Mammary epithelial cell (primary cell): ENCODE measurements at regions of chr10 and their contacts with region 1.

Region 1: DNA sequence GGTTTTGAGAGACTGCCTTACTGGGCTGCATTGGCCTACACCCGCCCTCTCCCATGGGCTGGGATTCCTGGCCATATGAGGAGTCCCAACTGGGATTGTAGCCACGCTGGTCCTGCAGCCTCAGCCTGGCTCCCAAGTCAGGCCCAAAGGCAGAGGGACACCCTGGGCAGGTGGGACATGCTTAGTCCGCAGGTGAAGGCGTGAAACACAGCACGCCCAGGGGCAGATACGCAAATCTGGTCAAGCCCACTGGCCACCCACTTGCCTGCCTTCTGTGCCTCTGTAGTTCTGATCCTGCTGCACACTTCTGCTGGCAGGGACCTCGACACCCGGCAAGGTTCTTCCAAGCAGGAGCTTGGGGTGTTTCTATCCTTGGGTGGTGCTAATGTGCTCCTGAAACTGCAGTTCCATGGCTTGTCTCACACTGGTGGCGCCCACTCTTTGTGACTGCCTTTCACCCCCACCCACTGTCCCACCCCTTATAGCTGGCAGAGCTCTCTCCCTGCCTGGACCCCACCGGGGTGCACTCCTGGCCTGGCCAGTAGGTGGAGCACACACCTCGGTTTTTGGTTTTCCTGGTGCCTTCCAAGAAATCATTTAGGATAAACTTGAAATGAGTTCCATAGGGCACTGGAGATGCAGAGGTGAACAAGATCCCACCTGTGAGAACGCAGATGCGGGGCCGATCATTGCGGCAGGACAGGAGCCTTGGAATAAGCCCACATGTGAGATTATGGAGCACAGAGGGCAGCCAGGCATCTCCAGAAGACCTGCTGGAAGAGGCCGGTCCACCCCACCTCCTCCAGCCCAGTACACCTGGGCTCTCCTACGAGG is 47.9 kb downstream of the MKI67 start:
- DNase-seq: no peak
- H3K4me3 ChIP-seq: no peak overlapping the region
- H3K27ac ChIP-seq: no peak overlapping the region
- H3K4me1 ChIP-seq: no peaks in the 10 kb centered on the region
- H3K27me3 ChIP-seq: no peaks in the 10 kb centered on the region
- CTCF ChIP-seq: peak; percentile 58 to 79

Region 2: GRCh38 chr10:127535802-127536515 is 542.4 kb before region 1 on chr10:
- CTCF ChIA-PET with region 1: no interaction called
- dilution Hi-C with region 1: no loop called
- in situ Hi-C with region 1: no loop called
- intact Hi-C with region 1: no loop called
- DNase-seq: no peak
- H3K4me3 ChIP-seq: no peak overlapping the region
- H3K27ac ChIP-seq: no peak overlapping the region
- H3K4me1 ChIP-seq: peaks cover 5% of the 10 kb centered on the region
- H3K27me3 ChIP-seq: no peaks in the 10 kb centered on the region
- CTCF ChIP-seq: no peak

Region 3: GRCh38 chr10:127990846-127991542 is 87.4 kb before region 1 on chr10:
- CTCF ChIA-PET with region 1: no interaction called
- dilution Hi-C with region 1: no loop called
- in situ Hi-C with region 1: no loop called
- intact Hi-C with region 1: no loop called
- DNase-seq: peak; percentile 91
- H3K4me3 ChIP-seq: no peak overlapping the region
- H3K27ac ChIP-seq: peak overlapping the region; percentile 76
- H3K4me1 ChIP-seq: peaks cover 39% of the 10 kb centered on the region
- H3K27me3 ChIP-seq: no peaks in the 10 kb centered on the region
- CTCF ChIP-seq: no peak

Region 4: GRCh38 chr10:128102480-128103228 is 24.3 kb after region 1 on chr10:
- CTCF ChIA-PET with region 1: interaction called, 10 read pairs
- dilution Hi-C with region 1: no loop called
- in situ Hi-C with region 1: no loop called
- intact Hi-C with region 1: no loop called
- DNase-seq: no peak
- H3K4me3 ChIP-seq: no peak overlapping the region
- H3K27ac ChIP-seq: no peak overlapping the region
- H3K4me1 ChIP-seq: no peaks in the 10 kb centered on the region
- H3K27me3 ChIP-seq: no peaks in the 10 kb centered on the region
- CTCF ChIP-seq: no peak

Region 5: DNA sequence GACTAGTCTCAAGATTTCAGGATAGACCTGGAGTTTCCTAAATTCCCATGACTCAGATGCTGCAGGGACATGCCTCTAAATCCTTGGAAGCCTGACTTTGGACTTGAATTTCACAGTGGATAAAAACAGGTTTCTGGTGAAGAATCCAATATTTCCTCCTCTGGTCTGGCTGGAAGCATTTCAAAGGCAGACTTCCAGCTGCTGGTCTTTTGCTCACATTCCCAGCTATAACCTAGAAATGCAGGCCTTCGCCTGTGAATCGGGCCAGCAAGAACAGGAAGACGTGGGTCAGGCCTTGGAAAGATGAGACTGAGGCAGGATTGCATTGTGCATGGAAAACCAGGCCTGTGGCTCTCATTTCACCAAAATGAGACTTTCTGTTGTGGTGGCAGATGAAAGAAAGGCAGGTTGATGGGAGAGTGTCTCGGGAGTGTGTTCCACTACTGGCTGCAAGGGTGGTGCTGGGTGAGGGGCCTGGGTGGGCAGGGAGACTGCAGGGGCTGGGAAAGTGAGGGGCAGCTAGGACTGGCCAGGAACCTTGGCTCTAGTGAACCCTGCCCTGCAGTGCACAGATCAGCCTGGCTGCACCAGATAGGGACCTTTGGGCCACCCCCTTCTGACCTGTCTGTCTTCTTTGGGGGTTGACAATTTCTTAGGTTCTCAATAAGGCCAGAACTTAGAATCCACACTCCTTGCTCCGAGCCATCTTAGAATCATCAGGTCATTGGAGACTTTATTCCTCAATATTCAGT is 536.6 kb after region 1 on chr10:
- CTCF ChIA-PET with region 1: no interaction called
- dilution Hi-C with region 1: no loop called
- in situ Hi-C with region 1: no loop called
- intact Hi-C with region 1: no loop called
- DNase-seq: no peak
- H3K4me3 ChIP-seq: no peak overlapping the region
- H3K27ac ChIP-seq: no peak overlapping the region
- H3K4me1 ChIP-seq: no peaks in the 10 kb centered on the region
- H3K27me3 ChIP-seq: no peaks in the 10 kb centered on the region
- CTCF ChIP-seq: no peak